Activated B cell treated with CpG ODN at 0.5 μM for 24 hours (primary cell): ENCODE measurements at regions of chr5 and their contacts with region 1.

Region 1: DNA sequence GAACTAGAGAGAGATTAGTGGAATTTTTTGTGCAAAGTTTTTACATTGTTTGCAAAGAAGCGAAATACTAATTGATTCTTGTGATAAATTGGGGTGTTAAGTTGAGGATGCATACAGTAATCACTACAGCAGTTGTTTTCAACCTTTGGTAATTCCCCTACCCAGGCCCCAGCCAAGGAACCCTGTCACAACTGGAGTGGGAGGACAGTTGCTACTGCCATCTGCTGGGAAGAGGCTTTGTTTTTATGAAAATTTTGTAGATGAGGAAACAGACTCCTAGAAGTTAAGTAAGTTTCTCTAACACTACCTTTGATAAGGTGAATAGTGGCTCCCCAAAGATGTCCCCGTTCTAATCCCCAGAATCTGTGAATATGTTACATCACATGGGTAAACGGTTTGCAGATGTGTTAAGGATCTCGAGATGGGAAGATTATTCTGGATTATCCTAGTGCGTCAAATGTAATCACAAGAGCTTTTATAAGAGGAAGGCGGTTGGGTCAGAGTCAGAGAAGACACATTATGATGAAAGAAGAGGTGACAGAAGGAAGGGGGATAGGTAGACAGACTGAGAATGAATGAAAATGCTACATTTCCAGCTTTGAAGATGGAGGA is 34.0 kb upstream of the PPP1R2B start:
- DNase-seq: no peak
- ATAC-seq: no peak
- H3K4me3 Mint-ChIP-seq: no peak overlapping the region
- H3K27ac Mint-ChIP-seq: no peak overlapping the region
- H3K4me1 Mint-ChIP-seq: no peaks in the 10 kb centered on the region
- H3K27me3 Mint-ChIP-seq: peaks cover 3% of the 10 kb centered on the region
- CTCF ChIP-seq: peak; percentile 13

Region 2: DNA sequence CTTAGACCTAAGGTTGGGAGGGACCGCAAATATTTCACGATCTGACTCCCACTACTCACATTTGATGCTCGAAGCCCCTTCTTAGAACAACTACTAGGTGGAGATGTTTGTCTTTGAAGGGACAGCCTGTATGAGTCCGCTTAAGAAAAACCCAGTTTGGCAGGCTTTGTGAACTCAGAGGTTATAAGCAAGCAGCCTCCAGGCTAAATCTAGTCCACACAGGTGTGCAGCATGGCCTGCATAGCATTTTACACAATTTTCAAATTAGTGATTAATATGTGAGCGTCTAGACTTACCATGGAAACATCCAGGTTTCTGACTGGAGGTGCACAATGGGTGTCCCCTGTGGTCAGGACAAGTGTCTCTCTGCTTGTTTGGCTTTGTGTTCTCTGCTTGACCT is 1675.4 kb before region 1 on chr5:
- CTCF ChIA-PET with region 1: no interaction called
- POLR2A ChIA-PET with region 1: no interaction called
- intact Hi-C with region 1: loop called (anchors 5 kb)
- DNase-seq: no peak
- ATAC-seq: no peak
- H3K4me3 Mint-ChIP-seq: no peak overlapping the region
- H3K27ac Mint-ChIP-seq: no peak overlapping the region
- H3K4me1 Mint-ChIP-seq: no peaks in the 10 kb centered on the region
- H3K27me3 Mint-ChIP-seq: peaks cover 11% of the 10 kb centered on the region
- CTCF ChIP-seq: no peak

Region 3: GRCh38 chr5:155943516-155944407 is 872.3 kb before region 1 on chr5:
- CTCF ChIA-PET with region 1: no interaction called
- POLR2A ChIA-PET with region 1: no interaction called
- intact Hi-C with region 1: loop called (anchors 2 kb)
- DNase-seq: no peak
- ATAC-seq: no peak
- H3K4me3 Mint-ChIP-seq: no peak overlapping the region
- H3K27ac Mint-ChIP-seq: no peak overlapping the region
- H3K4me1 Mint-ChIP-seq: peaks cover 2% of the 10 kb centered on the region
- H3K27me3 Mint-ChIP-seq: peaks cover 2% of the 10 kb centered on the region
- CTCF ChIP-seq: no peak

Region 4: GRCh38 chr5:156913719-156914370 is 97.8 kb after region 1 on chr5:
- CTCF ChIA-PET with region 1: no interaction called
- POLR2A ChIA-PET with region 1: no interaction called
- intact Hi-C with region 1: no loop called
- DNase-seq: no peak
- ATAC-seq: peak; percentile 90
- H3K4me3 Mint-ChIP-seq: peak overlapping the region; percentile 71
- H3K27ac Mint-ChIP-seq: peak overlapping the region; percentile 82
- H3K4me1 Mint-ChIP-seq: peaks cover 31% of the 10 kb centered on the region
- H3K27me3 Mint-ChIP-seq: no peaks in the 10 kb centered on the region
- CTCF ChIP-seq: no peak